ENCODE measurements at regions of chr1 and their contacts with region 1.

Region 1: GRCh38 chr1:211133836-211134669 is at the start of gene KCNH1:
- DNase-seq: peak; percentile 96
- H3K4me3 ChIP-seq: peak within 1 kb of the TSS; percentile 61 to 72
- H3K27ac ChIP-seq: peak within 1 kb of the TSS in 1 of 2 experiments; percentile 68; a peak in 2 of 4 replicates
- H3K4me1 ChIP-seq: peaks cover 0 to 13% of the 10 kb centered on the region in 2 experiments; a peak in 2 of 4 replicates
- H3K27me3 ChIP-seq: peaks cover 27% of the 10 kb centered on the region
- CTCF ChIP-seq: peak; percentile 95
- EP300 ChIP-seq: no peak; a peak in 2 of 4 replicates
- RAD21 ChIP-seq: peak; percentile 95
- polyA plus RNA-seq, gene KCNH1: 0.08 and 0.26 TPM in 2 replicates

Region 2: GRCh38 chr1:210159206-210159605 is 974.8 kb before region 1 on chr1:
- CTCF ChIA-PET with region 1: no interaction called
- POLR2A ChIA-PET with region 1: no interaction called
- DNase-seq: no peak
- H3K4me3 ChIP-seq: no peak overlapping the region
- H3K27ac ChIP-seq: no peak overlapping the region
- H3K4me1 ChIP-seq: peaks cover 0 to 6% of the 10 kb centered on the region in 2 experiments; a peak in 1 of 4 replicates
- H3K27me3 ChIP-seq: no peaks in the 10 kb centered on the region
- CTCF ChIP-seq: no peak
- EP300 ChIP-seq: no peak
- RAD21 ChIP-seq: no peak

Region 3: GRCh38 chr1:210360852-210361477 is 773.1 kb before region 1 on chr1:
- CTCF ChIA-PET with region 1: interaction called, 10 read pairs
- POLR2A ChIA-PET with region 1: no interaction called
- DNase-seq: peak; percentile 53
- H3K4me3 ChIP-seq: no peak overlapping the region
- H3K27ac ChIP-seq: no peak overlapping the region
- H3K4me1 ChIP-seq: peaks cover 0 to 2% of the 10 kb centered on the region in 2 experiments; a peak in 1 of 4 replicates
- H3K27me3 ChIP-seq: no peaks in the 10 kb centered on the region
- CTCF ChIP-seq: peak; percentile 82
- EP300 ChIP-seq: no peak
- RAD21 ChIP-seq: peak; percentile 72

Region 4: DNA sequence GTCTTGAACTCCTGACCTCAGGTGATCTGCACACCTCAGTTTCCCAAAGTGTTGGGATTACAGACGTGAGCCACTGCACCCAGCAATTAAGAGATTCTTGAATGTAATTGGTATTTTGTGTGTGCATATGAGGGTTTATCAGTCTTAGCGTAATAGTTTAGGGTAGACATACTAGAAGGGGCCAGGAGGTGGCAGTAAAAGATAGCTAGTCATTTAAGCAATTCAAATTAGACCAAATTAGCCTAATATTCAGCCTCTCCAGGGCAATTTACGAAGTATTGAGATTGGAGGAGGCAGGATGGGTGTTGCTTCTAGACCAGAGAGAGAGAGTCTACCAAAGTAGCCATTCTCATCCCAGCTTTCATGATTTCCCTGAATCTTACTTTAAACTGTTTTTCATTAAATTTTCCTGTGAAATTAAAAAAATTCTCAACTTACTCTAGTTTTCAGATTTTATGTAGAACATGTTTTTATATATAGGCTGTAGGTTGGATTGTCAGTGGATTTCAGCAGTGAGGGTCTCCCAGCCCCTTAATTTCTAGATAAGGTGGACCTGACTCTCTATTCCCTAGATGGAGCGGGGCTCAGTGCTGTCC is 685.7 kb before region 1 on chr1:
- CTCF ChIA-PET with region 1: interaction called, 264 read pairs
- POLR2A ChIA-PET with region 1: interaction called, 3 read pairs
- DNase-seq: peak; percentile 60
- H3K4me3 ChIP-seq: no peak overlapping the region
- H3K27ac ChIP-seq: no peak overlapping the region
- H3K4me1 ChIP-seq: peaks cover 3 to 9% of the 10 kb centered on the region in 2 experiments; a peak in 3 of 4 replicates
- H3K27me3 ChIP-seq: no peaks in the 10 kb centered on the region
- CTCF ChIP-seq: peak; percentile 90
- EP300 ChIP-seq: 0 out of 4 replicates have a peak, but pooled peaks of 1 of the 2 experiments have one; percentile 34
- RAD21 ChIP-seq: peak; percentile 96

Region 5: DNA sequence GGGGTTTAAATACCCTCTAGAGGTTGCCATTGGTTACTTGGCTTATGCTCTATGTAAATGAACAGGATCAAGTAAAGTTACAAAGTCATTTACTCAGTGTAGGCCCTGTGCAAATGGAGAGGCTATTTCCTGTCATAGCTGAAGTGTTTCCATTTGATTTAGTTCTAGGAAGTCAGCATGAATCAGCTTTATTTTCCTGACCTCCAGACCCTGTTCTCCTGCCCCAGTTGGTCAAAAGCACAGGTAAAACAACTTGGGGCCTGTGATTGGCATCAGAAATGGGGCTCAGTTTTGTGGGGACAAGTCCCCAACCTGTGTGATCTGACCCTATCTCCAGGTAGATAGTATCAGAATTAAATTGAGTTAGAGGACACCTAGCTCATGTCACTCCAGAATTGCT is 565.4 kb before region 1 on chr1:
- CTCF ChIA-PET with region 1: interaction called, 49 read pairs
- POLR2A ChIA-PET with region 1: interaction called, 5 read pairs
- DNase-seq: no peak
- H3K4me3 ChIP-seq: no peak overlapping the region
- H3K27ac ChIP-seq: no peak overlapping the region
- H3K4me1 ChIP-seq: peaks cover 0 to 37% of the 10 kb centered on the region in 2 experiments; a peak in 2 of 4 replicates
- H3K27me3 ChIP-seq: no peaks in the 10 kb centered on the region
- CTCF ChIP-seq: no peak
- EP300 ChIP-seq: no peak
- RAD21 ChIP-seq: no peak

Region 6: GRCh38 chr1:210663730-210664573 is 470.1 kb before region 1 on chr1:
- CTCF ChIA-PET with region 1: interaction called, 48 read pairs
- POLR2A ChIA-PET with region 1: interaction called, 17 read pairs
- DNase-seq: peak; percentile 82
- H3K4me3 ChIP-seq: no peak overlapping the region; a peak in 1 of 4 replicates
- H3K27ac ChIP-seq: peak overlapping the region in 1 of 2 experiments; percentile 87; a peak in 2 of 4 replicates
- H3K4me1 ChIP-seq: peaks cover 0 to 35% of the 10 kb centered on the region in 2 experiments; a peak in 2 of 4 replicates
- H3K27me3 ChIP-seq: no peaks in the 10 kb centered on the region
- CTCF ChIP-seq: no peak
- EP300 ChIP-seq: peak; percentile 19 to 99; a peak in 2 of 4 replicates
- RAD21 ChIP-seq: peak; percentile 36

Region 7: GRCh38 chr1:210949039-210949438 is 185.0 kb before region 1 on chr1:
- CTCF ChIA-PET with region 1: interaction called, 18 read pairs
- POLR2A ChIA-PET with region 1: no interaction called
- DNase-seq: no peak
- H3K4me3 ChIP-seq: no peak overlapping the region
- H3K27ac ChIP-seq: peak overlapping the region in 1 of 2 experiments; percentile 18; a peak in 1 of 4 replicates
- H3K4me1 ChIP-seq: peaks cover 0 to 12% of the 10 kb centered on the region in 2 experiments; a peak in 2 of 4 replicates
- H3K27me3 ChIP-seq: no peaks in the 10 kb centered on the region
- CTCF ChIP-seq: no peak
- EP300 ChIP-seq: no peak
- RAD21 ChIP-seq: no peak

Region 8: DNA sequence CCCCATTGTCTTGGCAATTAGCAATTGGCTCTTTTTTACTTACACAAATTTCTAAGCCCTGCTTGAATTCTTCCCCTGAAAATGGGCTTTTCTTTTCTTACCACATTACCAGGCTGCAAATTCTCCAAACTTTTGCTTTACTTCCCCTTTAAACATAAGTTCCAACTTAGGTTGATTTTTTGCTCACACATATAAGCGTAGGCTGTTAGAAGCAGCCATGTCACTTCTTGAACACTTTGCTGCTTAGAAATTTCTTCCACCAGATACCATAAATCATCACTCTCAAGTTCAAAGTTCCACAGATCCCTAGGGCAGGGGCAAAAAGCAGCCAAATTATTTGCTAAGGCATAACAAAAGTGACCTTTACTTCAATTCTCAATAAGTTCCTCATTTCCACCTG is 35.3 kb after region 1 on chr1:
- CTCF ChIA-PET with region 1: interaction called, 19 read pairs
- POLR2A ChIA-PET with region 1: no interaction called
- DNase-seq: no peak
- H3K4me3 ChIP-seq: no peak overlapping the region
- H3K27ac ChIP-seq: no peak overlapping the region
- H3K4me1 ChIP-seq: no peaks in the 10 kb centered on the region
- H3K27me3 ChIP-seq: no peaks in the 10 kb centered on the region
- CTCF ChIP-seq: no peak
- EP300 ChIP-seq: no peak
- RAD21 ChIP-seq: no peak

Region 9: DNA sequence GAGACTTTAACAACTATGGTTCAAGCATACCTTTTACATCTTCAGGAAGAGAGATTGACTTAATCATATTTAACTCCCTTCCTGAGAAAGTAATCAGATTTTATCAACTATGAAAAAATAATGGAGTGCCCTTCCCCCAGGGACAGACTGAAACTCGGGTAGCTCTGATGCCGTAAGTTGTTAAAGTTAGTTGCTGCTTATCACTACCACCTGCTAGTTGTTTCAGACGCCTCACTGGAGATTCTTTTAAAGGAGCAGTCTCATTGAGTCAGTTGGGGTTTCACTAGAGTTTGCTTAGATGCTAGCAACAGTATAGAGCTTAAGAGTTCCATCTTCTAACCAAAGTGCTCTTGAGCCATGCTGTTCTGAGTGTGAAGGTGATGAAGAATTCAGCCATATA is 175.6 kb after region 1 on chr1:
- CTCF ChIA-PET with region 1: no interaction called
- POLR2A ChIA-PET with region 1: no interaction called
- DNase-seq: no peak
- H3K4me3 ChIP-seq: no peak overlapping the region
- H3K27ac ChIP-seq: no peak overlapping the region
- H3K4me1 ChIP-seq: peaks cover 0 to 7% of the 10 kb centered on the region in 2 experiments; a peak in 1 of 4 replicates
- H3K27me3 ChIP-seq: no peaks in the 10 kb centered on the region
- CTCF ChIP-seq: no peak
- EP300 ChIP-seq: no peak
- RAD21 ChIP-seq: no peak

Region 10: DNA sequence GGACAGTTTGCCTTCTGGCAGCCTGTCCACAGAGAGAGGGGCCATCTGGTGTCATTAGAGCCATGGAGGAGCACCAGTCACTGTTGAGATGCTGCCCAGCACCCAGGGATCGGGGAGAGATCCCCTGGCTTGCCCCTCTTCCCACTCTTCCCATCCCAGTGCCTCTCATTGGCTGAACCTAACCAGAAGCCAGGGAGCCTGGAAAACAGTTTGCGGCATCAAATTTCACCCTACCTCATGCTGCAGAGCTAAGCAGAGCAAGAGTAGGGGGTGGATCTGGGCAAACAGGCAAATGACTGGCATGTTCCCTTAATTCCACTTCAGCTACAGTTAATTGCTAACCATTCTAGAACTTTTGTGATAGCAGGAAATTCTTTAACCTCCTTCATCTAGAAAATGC is 211.7 kb after region 1 on chr1:
- CTCF ChIA-PET with region 1: no interaction called
- POLR2A ChIA-PET with region 1: no interaction called
- DNase-seq: no peak
- H3K4me3 ChIP-seq: no peak overlapping the region
- H3K27ac ChIP-seq: peak overlapping the region in 1 of 2 experiments; percentile 7; a peak in 1 of 4 replicates
- H3K4me1 ChIP-seq: peaks cover 5 to 11% of the 10 kb centered on the region in 2 experiments; a peak in 1 of 4 replicates
- H3K27me3 ChIP-seq: no peaks in the 10 kb centered on the region
- CTCF ChIP-seq: no peak
- EP300 ChIP-seq: no peak
- RAD21 ChIP-seq: no peak

Measured in SK-N-SH (cell line).